ENCODE measurements at regions of chr6 and their contacts with region 1.

Region 1: DNA sequence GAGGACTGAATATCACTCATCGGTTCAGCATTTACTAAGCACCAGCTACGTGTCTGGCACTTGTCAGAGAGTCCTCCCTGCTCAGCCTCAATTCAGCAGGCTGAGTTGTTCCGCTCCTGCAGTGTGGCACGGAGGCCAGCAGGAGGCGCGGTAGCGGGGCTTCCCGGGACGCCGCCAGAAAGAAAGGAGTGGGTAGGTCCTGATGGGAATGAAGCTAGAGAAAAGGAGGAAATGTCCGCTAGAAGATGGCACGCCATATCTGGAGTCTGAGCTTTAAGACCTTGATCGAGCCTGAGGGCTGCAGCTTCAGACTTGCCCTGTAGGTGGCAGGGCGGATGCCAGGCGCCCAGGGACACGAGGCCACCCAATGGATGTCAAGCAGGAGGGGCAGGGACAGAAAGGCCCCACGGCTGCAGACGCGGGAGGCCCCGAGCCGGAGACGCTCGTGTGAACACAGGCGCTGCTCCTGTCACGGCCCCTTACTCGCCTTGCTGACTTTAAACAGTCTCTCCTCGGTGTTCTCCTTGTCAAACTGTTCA is 18.7 kb downstream of the SERPINB6 start:
- DNase-seq: peak; percentile 92
- H3K4me3 ChIP-seq: no peak overlapping the region
- H3K27ac ChIP-seq: no peak overlapping the region
- H3K4me1 ChIP-seq: peaks cover 3% of the 10 kb centered on the region
- H3K27me3 ChIP-seq: no peaks in the 10 kb centered on the region
- CTCF ChIP-seq: peak; percentile 91 to 99
- POLR2A ChIP-seq: no peak

Region 2: GRCh38 chr6:2783188-2783963 is 169.2 kb before region 1 on chr6:
- CTCF ChIA-PET with region 1: interaction called, 15 read pairs
- POLR2A ChIA-PET with region 1: no interaction called
- dilution Hi-C with region 1: no loop called
- intact Hi-C with region 1: no loop called
- DNase-seq: peak; percentile 94
- H3K4me3 ChIP-seq: peak overlapping the region in 1 of 3 experiments; percentile 8
- H3K27ac ChIP-seq: peak overlapping the region; percentile 73
- H3K4me1 ChIP-seq: peaks cover 23% of the 10 kb centered on the region
- H3K27me3 ChIP-seq: no peaks in the 10 kb centered on the region
- CTCF ChIP-seq: peak in 1 of 2 donors; percentile 35
- POLR2A ChIP-seq: no peak

Region 3: DNA sequence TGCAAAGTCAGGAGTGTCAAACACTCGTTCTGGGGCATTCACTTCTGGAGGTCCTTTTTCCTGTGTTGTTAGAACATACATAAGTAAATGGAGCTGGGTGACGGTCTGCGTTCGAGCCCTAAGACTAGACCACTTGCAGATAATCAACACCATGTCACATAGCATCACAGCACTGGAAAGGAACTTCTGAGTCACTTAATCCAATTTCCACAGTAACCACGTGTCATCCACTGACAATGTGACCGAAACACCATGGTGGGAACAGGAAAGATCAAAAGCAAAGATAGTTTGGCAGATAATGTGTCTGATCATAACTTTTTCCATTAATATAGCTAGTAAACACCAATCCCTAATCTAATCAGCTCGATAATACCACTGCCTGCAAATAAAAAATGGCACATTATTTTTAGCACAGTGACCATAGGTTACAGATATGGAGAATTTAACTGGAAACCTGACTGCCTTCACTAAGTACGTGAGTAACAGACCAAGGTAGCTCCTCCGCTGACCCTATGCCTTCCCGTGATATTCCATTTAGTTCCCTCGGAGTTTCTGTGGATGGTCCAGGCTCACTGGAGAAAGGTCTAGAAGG is 152.6 kb before region 1 on chr6:
- CTCF ChIA-PET with region 1: no interaction called
- POLR2A ChIA-PET with region 1: no interaction called
- dilution Hi-C with region 1: no loop called
- intact Hi-C with region 1: no loop called
- DNase-seq: peak; percentile 87
- H3K4me3 ChIP-seq: no peak overlapping the region
- H3K27ac ChIP-seq: no peak overlapping the region
- H3K4me1 ChIP-seq: peaks cover 19% of the 10 kb centered on the region
- H3K27me3 ChIP-seq: no peaks in the 10 kb centered on the region
- CTCF ChIP-seq: no peak
- POLR2A ChIP-seq: no peak

Region 4: GRCh38 chr6:2848851-2849250 is 103.8 kb before region 1 on chr6:
- CTCF ChIA-PET with region 1: interaction called, 45 read pairs
- POLR2A ChIA-PET with region 1: no interaction called
- dilution Hi-C with region 1: no loop called
- intact Hi-C with region 1: loop called (anchors 1 kb)
- DNase-seq: no peak
- H3K4me3 ChIP-seq: no peak overlapping the region
- H3K27ac ChIP-seq: no peak overlapping the region
- H3K4me1 ChIP-seq: peaks cover 31% of the 10 kb centered on the region
- H3K27me3 ChIP-seq: no peaks in the 10 kb centered on the region
- CTCF ChIP-seq: no peak
- POLR2A ChIP-seq: no peak

Region 5: DNA sequence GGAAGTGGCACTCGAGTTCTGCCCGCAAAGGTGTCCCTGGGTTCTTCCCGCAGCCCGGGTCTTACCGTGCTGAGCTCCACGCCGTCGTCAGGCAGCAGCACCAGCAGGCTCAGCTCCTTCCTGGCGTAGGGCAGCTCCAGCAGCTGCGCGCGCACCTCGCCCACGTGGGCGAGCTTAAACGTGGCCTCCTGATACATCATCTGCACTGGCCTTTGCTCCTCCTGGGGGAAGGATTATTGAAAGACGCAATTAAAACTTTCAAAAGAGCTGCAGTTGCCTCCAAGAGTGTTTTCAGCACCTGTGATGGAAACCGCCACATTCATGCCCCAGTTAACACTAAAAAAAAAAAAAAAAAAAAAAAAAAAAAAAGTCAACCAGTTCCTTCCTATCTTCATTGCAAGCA is 60.9 kb before region 1 on chr6:
- CTCF ChIA-PET with region 1: no interaction called
- POLR2A ChIA-PET with region 1: no interaction called
- dilution Hi-C with region 1: no loop called
- intact Hi-C with region 1: no loop called
- DNase-seq: no peak
- H3K4me3 ChIP-seq: no peak overlapping the region
- H3K27ac ChIP-seq: no peak overlapping the region
- H3K4me1 ChIP-seq: no peaks in the 10 kb centered on the region
- H3K27me3 ChIP-seq: no peaks in the 10 kb centered on the region
- CTCF ChIP-seq: no peak
- POLR2A ChIP-seq: no peak

Region 6: GRCh38 chr6:2931970-2932748 is 20.5 kb before region 1 on chr6:
- CTCF ChIA-PET with region 1: interaction called, 20 read pairs
- POLR2A ChIA-PET with region 1: no interaction called
- dilution Hi-C with region 1: no loop called
- intact Hi-C with region 1: no loop called
- DNase-seq: peak; percentile 84
- H3K4me3 ChIP-seq: no peak overlapping the region
- H3K27ac ChIP-seq: no peak overlapping the region
- H3K4me1 ChIP-seq: peaks cover 2% of the 10 kb centered on the region
- H3K27me3 ChIP-seq: no peaks in the 10 kb centered on the region
- CTCF ChIP-seq: peak; percentile 93 to 96
- POLR2A ChIP-seq: no peak

Region 7: DNA sequence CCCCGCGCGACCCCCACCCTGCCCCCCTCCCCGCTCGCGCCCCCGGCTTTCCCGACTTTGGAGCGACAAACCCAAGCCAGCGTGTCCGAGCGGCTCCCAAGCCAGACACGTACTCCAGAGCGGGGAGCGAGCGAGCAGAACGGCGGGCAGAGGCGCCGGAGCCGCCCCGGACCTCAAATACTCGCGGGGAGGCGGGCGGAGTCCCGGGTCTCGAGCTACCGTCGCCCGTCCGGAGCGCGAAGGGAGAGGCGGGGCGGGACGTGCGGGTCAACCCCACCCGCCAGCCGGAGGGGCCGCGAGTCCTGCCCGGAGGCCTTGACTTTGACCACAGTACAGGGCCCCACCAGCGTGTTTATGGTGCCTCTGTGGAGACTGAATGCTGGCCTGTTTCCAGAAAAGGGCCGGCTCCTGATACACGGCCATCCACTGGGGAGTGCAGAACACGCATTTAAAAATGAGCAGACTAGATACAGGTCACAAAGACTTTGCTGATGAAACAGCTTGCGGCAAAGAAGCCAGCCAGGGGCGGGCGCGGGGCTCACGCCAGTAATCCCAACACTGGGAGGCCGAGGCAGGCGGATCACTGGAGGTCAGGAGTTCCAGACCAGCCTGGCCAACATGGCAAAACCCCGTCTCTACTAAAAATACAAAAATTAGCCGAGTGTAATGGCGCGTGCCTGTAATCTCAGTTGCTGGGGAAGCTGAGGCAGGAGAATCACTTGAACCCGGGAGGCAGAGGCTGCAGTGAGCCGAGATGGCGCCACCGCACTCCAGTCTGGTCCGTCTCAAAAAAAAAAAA is 19.0 kb after region 1 on chr6 and contains the start of gene SERPINB6:
- CTCF ChIA-PET with region 1: interaction called, 35 read pairs
- POLR2A ChIA-PET with region 1: no interaction called
- dilution Hi-C with region 1: no loop called
- intact Hi-C with region 1: loop called (anchors 1 kb)
- DNase-seq: peak; percentile 76
- H3K4me3 ChIP-seq: peak within 1 kb of the TSS; percentile 15 to 58 (median 54)
- H3K27ac ChIP-seq: peak within 1 kb of the TSS; percentile 51
- H3K4me1 ChIP-seq: peaks cover 8% of the 10 kb centered on the region
- H3K27me3 ChIP-seq: no peaks in the 10 kb centered on the region
- CTCF ChIP-seq: no peak
- POLR2A ChIP-seq: no peak
- total RNA-seq, gene SERPINB6: 145 and 155 TPM in 2 replicates

Region 8: GRCh38 chr6:2999618-3000557 is 47.3 kb after region 1 on chr6 and contains the start of gene NQO2:
- CTCF ChIA-PET with region 1: interaction called, 14 read pairs
- POLR2A ChIA-PET with region 1: no interaction called
- dilution Hi-C with region 1: no loop called
- intact Hi-C with region 1: no loop called
- DNase-seq: peak; percentile 86
- H3K4me3 ChIP-seq: peak within 1 kb of the TSS; percentile 51 to 66 (median 62)
- H3K27ac ChIP-seq: peak within 1 kb of the TSS; percentile 70
- H3K4me1 ChIP-seq: peaks cover 16% of the 10 kb centered on the region
- H3K27me3 ChIP-seq: no peaks in the 10 kb centered on the region
- CTCF ChIP-seq: no peak
- POLR2A ChIP-seq: peak; percentile 72
- total RNA-seq, gene NQO2: 27.6 and 31.6 TPM in 2 replicates